ENCODE measurements at regions of chr12 and their contacts with region 1.

Region 1: GRCh38 chr12:117836999-117837736 is 131.6 kb downstream of the KSR2 start:
- DNase-seq: peak; percentile 90
- ATAC-seq: peak; percentile 78

Region 2: GRCh38 chr12:117212563-117213190 is 624.5 kb before region 1 on chr12:
- intact Hi-C with region 1: loop called (anchors 10 kb)
- DNase-seq: peak; percentile 87
- ATAC-seq: peak; percentile 94